ENCODE measurements at regions of chr3 and their contacts with region 1.

Region 1: DNA sequence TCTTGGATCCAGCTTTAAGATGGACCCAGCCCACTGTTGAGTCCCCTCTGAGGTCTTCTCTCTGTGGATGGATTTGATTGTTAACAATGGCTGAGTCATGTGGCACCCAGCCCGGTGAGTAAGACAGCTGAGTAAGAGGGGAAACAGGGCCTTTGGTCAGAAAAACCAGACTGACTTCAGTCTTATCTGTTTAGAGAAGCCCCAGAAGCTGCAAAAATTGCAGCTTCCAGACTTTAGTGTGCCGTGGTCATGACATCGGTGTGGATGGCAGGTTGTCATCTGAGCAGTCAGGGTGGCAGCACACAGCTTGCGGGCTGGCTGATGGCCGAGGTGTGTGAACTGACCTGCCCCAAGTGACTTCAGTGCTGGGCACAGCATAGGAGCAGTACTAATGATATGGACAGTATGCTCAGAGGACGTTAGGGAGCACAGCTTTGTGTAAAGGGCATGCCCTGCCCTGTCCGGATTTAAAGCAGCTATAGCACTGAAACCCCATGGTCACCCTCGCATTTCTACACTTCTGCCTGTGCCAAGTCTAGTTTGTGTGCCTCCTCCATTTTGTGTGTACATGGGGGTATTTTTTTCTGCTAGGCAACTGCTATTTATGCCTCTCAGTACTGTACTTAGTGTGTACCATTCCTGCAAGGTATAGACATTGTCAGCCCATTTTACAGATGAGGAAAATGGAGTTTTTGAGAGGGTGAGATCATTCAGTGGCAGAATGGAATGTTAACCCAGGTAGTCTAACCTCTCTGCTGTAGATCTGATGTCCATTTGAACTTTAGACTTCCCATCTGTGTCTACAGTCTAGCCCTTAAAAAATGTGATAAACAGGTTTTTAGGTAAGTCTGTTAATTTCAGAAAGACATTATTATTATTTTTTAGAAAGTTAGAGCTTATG is 44.4 kb downstream of the FLNB start:
- DNase-seq: peak; percentile 77
- H3K4me3 Mint-ChIP-seq: no peak overlapping the region
- H3K27ac Mint-ChIP-seq: peak overlapping the region; percentile 54
- H3K4me1 Mint-ChIP-seq: peaks cover 13% of the 10 kb centered on the region
- H3K27me3 Mint-ChIP-seq: no peaks in the 10 kb centered on the region

Region 2: GRCh38 chr3:58025837-58026569 is 26.6 kb before region 1 on chr3:
- CTCF ChIA-PET with region 1: no interaction called
- POLR2A ChIA-PET with region 1: no interaction called
- intact Hi-C with region 1: loop called (anchors 1 kb)
- DNase-seq: no peak
- H3K4me3 Mint-ChIP-seq: no peak overlapping the region
- H3K27ac Mint-ChIP-seq: no peak overlapping the region
- H3K4me1 Mint-ChIP-seq: peaks cover 47% of the 10 kb centered on the region
- H3K27me3 Mint-ChIP-seq: no peaks in the 10 kb centered on the region

Region 3: GRCh38 chr3:58034738-58035523 is 17.7 kb before region 1 on chr3:
- CTCF ChIA-PET with region 1: no interaction called
- POLR2A ChIA-PET with region 1: interaction called, 3 read pairs
- intact Hi-C with region 1: loop called (anchors 1 kb)
- DNase-seq: peak; percentile 64
- H3K4me3 Mint-ChIP-seq: peak overlapping the region; percentile 21
- H3K27ac Mint-ChIP-seq: peak overlapping the region; percentile 71
- H3K4me1 Mint-ChIP-seq: peaks cover 37% of the 10 kb centered on the region
- H3K27me3 Mint-ChIP-seq: no peaks in the 10 kb centered on the region